ENCODE measurements at regions of chr11 and their contacts with region 1.

Region 1: GRCh38 chr11:31804312-31805036 is 6.6 kb downstream of the PAX6 start:
- DNase-seq: no peak
- H3K4me3 ChIP-seq: peak overlapping the region in 1 of 3 donors; percentile 41
- H3K27ac ChIP-seq: no peak overlapping the region
- H3K4me1 ChIP-seq: peaks cover 3 to 14% of the 10 kb centered on the region in 2 donors
- H3K27me3 ChIP-seq: peaks cover 0 to 99% of the 10 kb centered on the region in 2 donors
- CTCF ChIP-seq: no peak
- POLR2A ChIP-seq: no peak

Region 2: GRCh38 chr11:30786256-30787110 is 1018.0 kb before region 1 on chr11:
- intact Hi-C with region 1: no loop called
- DNase-seq: no peak
- H3K4me3 ChIP-seq: no peak overlapping the region
- H3K27ac ChIP-seq: peak overlapping the region; percentile 28 to 37
- H3K4me1 ChIP-seq: no peaks in the 10 kb centered on the region
- H3K27me3 ChIP-seq: no peaks in the 10 kb centered on the region
- CTCF ChIP-seq: no peak
- POLR2A ChIP-seq: no peak

Region 3: GRCh38 chr11:31529701-31530100 is 274.8 kb before region 1 on chr11:
- intact Hi-C with region 1: loop called (anchors 5 kb)
- DNase-seq: no peak
- H3K4me3 ChIP-seq: no peak overlapping the region
- H3K27ac ChIP-seq: no peak overlapping the region
- H3K4me1 ChIP-seq: no peaks in the 10 kb centered on the region
- H3K27me3 ChIP-seq: no peaks in the 10 kb centered on the region
- CTCF ChIP-seq: no peak
- POLR2A ChIP-seq: no peak

Measured in breast epithelium (tissue), 4 donors.